A549 (cell line): ENCODE measurements at regions of chr12 and their contacts with region 1.

Region 1: DNA sequence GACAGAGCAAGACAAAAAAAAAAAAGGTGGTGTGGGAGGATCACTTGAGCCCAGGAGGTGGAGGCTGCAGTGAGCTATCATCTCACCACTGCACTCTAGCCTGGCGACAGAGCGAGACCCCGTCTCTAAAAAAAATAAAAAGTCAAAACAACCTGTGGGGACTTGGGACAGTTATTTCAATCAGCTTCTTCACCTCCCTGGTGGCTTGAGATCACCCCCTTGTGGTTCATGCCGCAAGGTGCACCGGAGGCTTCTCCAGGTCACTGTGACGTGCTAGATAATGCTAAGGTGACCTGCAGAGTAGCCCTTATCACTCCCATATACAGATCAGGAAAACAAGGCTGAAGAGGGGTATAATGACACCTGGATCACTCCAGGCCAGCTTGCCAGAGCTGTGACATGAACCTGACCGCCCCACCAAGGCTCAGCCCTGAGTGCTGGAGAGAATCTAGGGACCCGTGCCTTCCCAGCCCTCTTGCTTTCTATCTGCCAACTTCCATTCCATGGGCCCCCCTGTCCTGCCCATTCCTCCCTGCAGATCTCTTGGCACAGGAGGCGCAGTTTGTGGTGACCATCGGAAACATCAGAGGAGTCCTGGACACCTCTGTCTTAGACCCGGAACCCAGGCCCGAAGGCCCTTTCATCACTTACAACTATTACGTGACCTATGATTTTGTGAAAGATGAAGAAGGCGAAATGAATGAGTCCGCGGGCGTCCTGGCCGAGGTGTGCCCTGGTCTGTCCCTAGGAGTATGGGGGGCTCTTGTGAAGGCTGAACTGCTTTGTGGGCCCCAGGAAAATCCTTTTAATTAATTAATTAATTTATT is 8.1 kb downstream of the LRRC43 start:
- DNase-seq: peak; percentile 79 to 93
- ATAC-seq: peak; percentile 95
- H3K4me3 ChIP-seq: no peak overlapping the region
- H3K27ac ChIP-seq: no peak overlapping the region
- H3K4me1 ChIP-seq: no peaks in the 10 kb centered on the region
- CTCF ChIP-seq: peak; percentile 71
- EP300 ChIP-seq: no peak
- POLR2A ChIP-seq: no peak
- RAD21 ChIP-seq: peak; percentile 80 to 92

Region 2: GRCh38 chr12:122078141-122079032 is 112.7 kb before region 1 on chr12 and contains the start of gene MLXIP:
- CTCF ChIA-PET with region 1: interaction called, 10 read pairs
- POLR2A ChIA-PET with region 1: interaction called, 3 read pairs
- DNase-seq: peak; percentile 94
- ATAC-seq: peak; percentile 83 to 86
- H3K4me3 ChIP-seq: peak within 1 kb of the TSS; percentile 94
- H3K27ac ChIP-seq: peak within 1 kb of the TSS; percentile 88 to 98
- H3K4me1 ChIP-seq: peaks cover 46% of the 10 kb centered on the region
- CTCF ChIP-seq: no peak
- EP300 ChIP-seq: no peak
- POLR2A ChIP-seq: peak; percentile 67
- RAD21 ChIP-seq: no peak
- polyA plus RNA-seq, gene MLXIP: 7.0 and 11.6 TPM in 2 replicates

Region 3: DNA sequence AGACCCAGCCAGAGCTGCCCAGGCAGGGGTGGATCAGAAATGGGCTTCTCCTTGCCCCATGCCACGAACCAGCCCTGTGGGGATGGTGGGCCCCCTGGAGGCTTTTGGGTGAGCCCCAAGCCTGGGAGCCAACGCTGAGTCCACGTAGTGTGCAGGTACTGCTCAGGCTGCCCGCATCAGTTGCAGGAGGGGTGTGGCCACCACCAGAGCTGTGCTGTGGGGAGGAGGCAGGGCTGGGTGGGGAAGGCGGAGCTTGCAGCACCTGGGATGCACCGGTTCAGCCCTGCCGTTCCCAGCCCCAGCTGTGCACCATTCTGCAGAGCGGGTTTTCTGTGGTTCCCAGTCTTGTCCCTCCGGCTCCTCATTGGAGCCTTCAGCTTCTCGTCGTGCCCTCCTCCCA is 53.4 kb before region 1 on chr12:
- CTCF ChIA-PET with region 1: interaction called, 117 read pairs
- POLR2A ChIA-PET with region 1: no interaction called
- DNase-seq: no peak
- ATAC-seq: peak; percentile 31 to 63; a peak in 3 of 6 replicates
- H3K4me3 ChIP-seq: no peak overlapping the region
- H3K27ac ChIP-seq: no peak overlapping the region
- H3K4me1 ChIP-seq: no peaks in the 10 kb centered on the region
- CTCF ChIP-seq: no peak
- EP300 ChIP-seq: no peak
- POLR2A ChIP-seq: no peak
- RAD21 ChIP-seq: no peak

Region 4: DNA sequence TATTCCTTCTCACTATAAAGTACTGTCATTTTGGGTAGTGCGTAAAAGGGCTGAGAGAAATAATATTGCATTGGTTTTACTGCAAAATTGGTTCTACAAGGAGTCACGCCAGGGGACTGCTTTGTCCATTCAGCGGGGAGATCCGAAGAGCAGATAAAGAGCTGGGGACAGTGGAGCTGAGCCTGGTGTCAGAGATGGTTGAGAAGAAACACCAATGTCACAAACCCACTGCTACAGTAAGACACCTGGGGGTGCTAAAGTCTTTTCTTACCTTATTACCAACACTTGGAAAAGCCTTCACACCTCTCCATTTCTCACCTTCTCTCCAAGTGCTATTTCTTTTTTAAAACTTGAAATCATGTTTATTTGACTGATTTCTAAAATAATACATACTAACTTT is 31.2 kb before region 1 on chr12:
- CTCF ChIA-PET with region 1: interaction called, 11 read pairs
- POLR2A ChIA-PET with region 1: no interaction called
- DNase-seq: no peak
- ATAC-seq: peak in 1 of 2 experiments; percentile 45; a peak in 3 of 6 replicates
- H3K4me3 ChIP-seq: no peak overlapping the region
- H3K27ac ChIP-seq: no peak overlapping the region
- H3K4me1 ChIP-seq: no peaks in the 10 kb centered on the region
- CTCF ChIP-seq: no peak
- EP300 ChIP-seq: no peak
- POLR2A ChIP-seq: no peak
- RAD21 ChIP-seq: peak in 1 of 2 experiments; percentile 11; a peak in 1 of 5 replicates

Region 5: GRCh38 chr12:122166422-122167349 is 24.4 kb before region 1 on chr12:
- CTCF ChIA-PET with region 1: interaction called, 15 read pairs
- POLR2A ChIA-PET with region 1: no interaction called
- DNase-seq: no peak
- ATAC-seq: peak in 1 of 2 experiments; percentile 30; a peak in 2 of 6 replicates
- H3K4me3 ChIP-seq: no peak overlapping the region
- H3K27ac ChIP-seq: no peak overlapping the region
- H3K4me1 ChIP-seq: no peaks in the 10 kb centered on the region
- CTCF ChIP-seq: no peak
- EP300 ChIP-seq: no peak
- POLR2A ChIP-seq: no peak
- RAD21 ChIP-seq: no peak

Region 6: DNA sequence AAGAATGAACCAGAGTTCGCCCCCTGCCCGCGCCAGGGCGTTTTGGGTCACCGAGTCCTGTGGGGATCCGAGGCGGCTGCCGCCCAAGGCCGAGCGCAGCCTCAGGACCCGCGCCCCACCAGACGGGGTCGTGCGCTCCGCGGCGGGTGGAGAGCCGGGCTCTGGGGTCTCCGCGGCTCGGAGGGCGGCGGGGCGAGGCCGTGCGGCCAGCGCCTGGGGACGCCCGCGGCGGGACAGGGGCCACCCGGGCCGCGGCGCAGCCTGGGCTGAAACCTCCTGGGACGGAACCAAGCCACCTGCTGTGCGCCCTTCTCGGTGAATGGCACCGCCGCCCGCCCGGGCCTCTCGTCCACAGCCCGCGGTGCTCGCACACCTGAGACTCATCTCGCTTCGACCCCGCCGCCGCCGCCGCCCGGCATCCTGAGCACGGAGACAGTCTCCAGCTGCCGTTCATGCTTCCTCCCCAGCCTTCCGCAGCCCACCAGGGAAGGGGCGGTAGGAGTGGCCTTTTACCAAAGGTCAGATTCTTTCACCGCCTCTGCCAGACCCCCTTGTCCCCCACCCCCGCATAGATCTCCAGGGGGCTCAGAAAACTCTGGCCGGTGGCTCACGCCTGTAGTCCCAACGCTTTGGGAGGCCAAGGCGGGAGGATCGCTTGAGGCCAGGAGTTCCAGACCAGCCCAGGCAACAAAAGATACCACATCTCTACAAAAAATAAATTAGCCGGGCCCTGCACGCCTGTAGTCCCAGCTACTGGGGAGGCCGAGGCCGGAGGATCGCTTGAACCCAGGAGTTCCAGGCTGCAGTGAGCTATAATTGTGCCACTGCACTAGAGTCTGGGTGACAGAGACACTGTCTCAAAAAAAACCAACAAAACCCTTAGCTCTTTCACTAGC is 13.4 kb after region 1 on chr12:
- CTCF ChIA-PET with region 1: interaction called, 12 read pairs
- POLR2A ChIA-PET with region 1: no interaction called
- DNase-seq: no peak
- ATAC-seq: peak in 1 of 2 experiments; percentile 3; a peak in 1 of 6 replicates
- H3K4me3 ChIP-seq: peak overlapping the region; percentile 59
- H3K27ac ChIP-seq: peak overlapping the region in 1 of 2 experiments; percentile 93; a peak in 4 of 6 replicates
- H3K4me1 ChIP-seq: no peaks in the 10 kb centered on the region
- CTCF ChIP-seq: no peak
- EP300 ChIP-seq: no peak
- POLR2A ChIP-seq: no peak
- RAD21 ChIP-seq: no peak

Region 7: GRCh38 chr12:122282066-122282465 is 91.0 kb after region 1 on chr12:
- CTCF ChIA-PET with region 1: no interaction called
- POLR2A ChIA-PET with region 1: no interaction called
- DNase-seq: peak in 1 of 2 experiments; percentile 29
- ATAC-seq: peak in 1 of 2 experiments; percentile 56; a peak in 3 of 6 replicates
- H3K4me3 ChIP-seq: no peak overlapping the region
- H3K27ac ChIP-seq: no peak overlapping the region
- H3K4me1 ChIP-seq: peaks cover 10% of the 10 kb centered on the region; the same call in 2 of the 3 replicates
- CTCF ChIP-seq: no peak
- EP300 ChIP-seq: no peak
- POLR2A ChIP-seq: no peak
- RAD21 ChIP-seq: no peak